Naive thymus-derived CD4-positive, alpha-beta T cell (primary cell): ENCODE measurements at regions of chr1 and their contacts with region 1.

Region 1: DNA sequence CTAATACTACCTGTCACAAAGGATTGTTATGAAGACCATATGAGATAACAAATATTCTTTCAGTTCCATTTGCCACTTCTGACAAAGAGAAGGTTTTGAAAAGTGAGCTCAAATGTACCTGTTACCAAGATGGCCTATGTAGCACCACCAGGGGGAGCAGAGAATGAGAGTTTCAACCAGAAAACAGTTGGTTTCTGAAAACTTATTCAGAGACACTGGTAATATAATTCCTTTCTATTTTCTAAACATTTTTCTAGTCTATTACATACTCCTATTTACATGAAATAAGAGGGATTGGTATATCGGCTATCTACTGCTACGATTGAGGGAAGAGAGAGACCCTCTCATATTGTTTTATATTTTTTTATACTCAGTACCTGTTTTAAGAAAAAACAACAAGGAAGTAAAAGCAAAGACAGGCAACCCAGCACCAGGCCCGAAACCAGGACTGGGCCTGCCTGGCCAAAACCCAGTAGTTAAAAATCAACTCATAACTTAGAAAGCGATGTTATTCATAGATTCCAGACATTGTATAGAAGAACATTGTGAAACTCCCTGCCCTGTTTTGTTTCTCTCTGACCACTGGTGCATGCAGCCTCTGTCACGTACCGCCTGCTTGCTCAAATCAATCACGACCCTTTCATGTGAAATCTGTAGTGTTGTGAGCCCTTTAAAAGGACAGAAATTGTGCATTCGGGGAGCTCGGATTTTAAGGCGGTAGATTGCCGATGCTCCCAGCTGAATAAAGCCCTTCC is 48.3 kb downstream of the IL23R start:
- DNase-seq: peak in 7 of 9 donors; percentile 18 to 58 (median 45)
- ATAC-seq: peak; percentile 57
- H3K4me3 ChIP-seq: no peak overlapping the region
- H3K4me3 Mint-ChIP-seq: no peak overlapping the region
- H3K27ac ChIP-seq: no peak overlapping the region
- H3K27ac Mint-ChIP-seq: peak overlapping the region in 3 of 9 donors; percentile 27 to 77 (median 70)
- H3K4me1 ChIP-seq: peaks cover 0 to 8% of the 10 kb centered on the region in 2 donors
- H3K4me1 Mint-ChIP-seq: peaks cover 14 to 43% (median 23%) of the 10 kb centered on the region in 7 donors
- H3K27me3 ChIP-seq: no peaks in the 10 kb centered on the region
- H3K27me3 Mint-ChIP-seq: no peaks in the 10 kb centered on the region

Region 2: GRCh38 chr1:66929999-66930822 is 284.4 kb before region 1 on chr1:
- CTCF ChIA-PET with region 1: interaction called, 3 read pairs
- POLR2A ChIA-PET with region 1: no interaction called
- intact Hi-C with region 1: loop called in 1 of 2 experiments (anchors 5 kb)
- DNase-seq: peak; percentile 88 to 97 (median 92)
- ATAC-seq: peak; percentile 88
- H3K4me3 ChIP-seq: peak overlapping the region; percentile 69
- H3K4me3 Mint-ChIP-seq: peak overlapping the region; percentile 85 to 98 (median 92)
- H3K27ac ChIP-seq: peak overlapping the region; percentile 91
- H3K27ac Mint-ChIP-seq: peak overlapping the region; percentile 79 to 95 (median 90)
- H3K4me1 ChIP-seq: peaks cover 45 to 48% of the 10 kb centered on the region in 2 donors
- H3K4me1 Mint-ChIP-seq: peaks cover 38 to 88% (median 70%) of the 10 kb centered on the region in 7 donors
- H3K27me3 ChIP-seq: no peaks in the 10 kb centered on the region
- H3K27me3 Mint-ChIP-seq: no peaks in the 10 kb centered on the region

Region 3: DNA sequence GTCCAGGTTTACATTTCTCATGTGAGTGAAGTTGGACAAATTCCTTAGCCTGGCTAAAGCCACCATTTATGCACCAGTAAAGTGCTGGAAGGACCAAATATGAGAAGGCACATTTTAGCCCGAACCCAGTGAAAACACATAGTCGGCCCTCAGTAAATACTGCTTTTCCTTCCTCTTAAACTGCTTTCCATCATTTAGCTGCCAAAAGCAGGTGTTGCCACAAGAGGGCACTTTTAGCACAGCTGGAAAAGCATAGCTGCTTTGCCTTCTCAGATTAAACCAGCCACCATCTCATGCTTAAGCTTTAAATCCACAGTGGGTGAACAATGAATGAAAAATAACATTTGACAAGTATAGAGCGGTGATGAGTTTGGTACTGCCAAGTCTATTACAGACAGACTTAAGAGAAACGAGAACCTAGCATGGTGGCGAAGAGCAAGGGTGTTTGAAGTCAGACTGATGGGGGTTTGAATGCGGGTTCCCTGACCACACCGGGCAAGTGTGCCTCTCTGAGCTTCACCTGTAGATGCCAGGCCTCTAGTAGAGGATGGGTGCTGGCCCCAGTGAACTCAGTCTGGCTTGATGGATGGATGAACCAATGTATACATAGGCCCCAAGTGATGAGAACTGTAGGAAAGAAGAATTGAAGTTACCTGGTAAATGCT is 218.4 kb before region 1 on chr1:
- CTCF ChIA-PET with region 1: interaction called, 36 read pairs
- POLR2A ChIA-PET with region 1: no interaction called
- intact Hi-C with region 1: loop called (anchors 1 kb)
- DNase-seq: peak; percentile 14 to 75 (median 63)
- ATAC-seq: peak; percentile 93
- H3K4me3 ChIP-seq: no peak overlapping the region
- H3K4me3 Mint-ChIP-seq: no peak overlapping the region
- H3K27ac ChIP-seq: no peak overlapping the region
- H3K27ac Mint-ChIP-seq: peak overlapping the region in 5 of 9 donors; percentile 7 to 78 (median 74)
- H3K4me1 ChIP-seq: peaks cover 0 to 5% of the 10 kb centered on the region in 2 donors
- H3K4me1 Mint-ChIP-seq: peaks cover 4 to 24% (median 23%) of the 10 kb centered on the region in 7 donors
- H3K27me3 ChIP-seq: no peaks in the 10 kb centered on the region
- H3K27me3 Mint-ChIP-seq: no peaks in the 10 kb centered on the region

Region 4: GRCh38 chr1:67174716-67175284 is 39.8 kb before region 1 on chr1:
- CTCF ChIA-PET with region 1: interaction called, 49 read pairs
- POLR2A ChIA-PET with region 1: interaction called, 8 read pairs
- intact Hi-C with region 1: loop called (anchors 1 kb)
- DNase-seq: no peak
- ATAC-seq: no peak
- H3K4me3 ChIP-seq: no peak overlapping the region
- H3K4me3 Mint-ChIP-seq: peak overlapping the region in 1 of 10 donors; percentile 15
- H3K27ac ChIP-seq: no peak overlapping the region
- H3K27ac Mint-ChIP-seq: peak overlapping the region in 1 of 9 donors; percentile 60
- H3K4me1 ChIP-seq: peaks cover 29 to 32% of the 10 kb centered on the region in 2 donors
- H3K4me1 Mint-ChIP-seq: peaks cover 43 to 66% (median 53%) of the 10 kb centered on the region in 7 donors
- H3K27me3 ChIP-seq: no peaks in the 10 kb centered on the region
- H3K27me3 Mint-ChIP-seq: peaks cover 0 to 4% (median 0%) of the 10 kb centered on the region in 5 donors

Region 5: DNA sequence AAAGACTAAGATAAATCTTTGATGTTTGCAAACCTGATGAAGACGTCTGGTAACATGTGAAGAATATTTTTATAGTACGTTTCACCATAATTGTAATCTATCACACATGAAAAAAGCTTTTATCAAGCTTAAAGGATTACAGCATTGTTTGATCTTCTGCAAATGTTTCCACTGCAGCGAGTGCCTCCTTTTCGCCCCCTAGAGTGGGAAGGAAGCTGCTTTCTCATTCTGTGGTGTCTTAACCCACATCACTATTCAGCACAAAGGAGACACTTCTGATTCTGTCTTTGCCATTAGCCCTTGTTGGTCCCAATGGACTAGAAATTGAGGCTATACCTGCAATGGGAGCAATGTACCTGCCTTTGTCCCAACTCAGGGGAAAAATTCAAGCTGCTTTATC is 47.1 kb after region 1 on chr1:
- CTCF ChIA-PET with region 1: interaction called, 10 read pairs
- POLR2A ChIA-PET with region 1: no interaction called
- intact Hi-C with region 1: loop called in 1 of 2 experiments (anchors 1 kb)
- DNase-seq: peak in 8 of 9 donors; percentile 24 to 67 (median 57)
- ATAC-seq: peak; percentile 52
- H3K4me3 ChIP-seq: no peak overlapping the region
- H3K4me3 Mint-ChIP-seq: peak overlapping the region in 7 of 10 donors; percentile 17 to 73 (median 34)
- H3K27ac ChIP-seq: no peak overlapping the region
- H3K27ac Mint-ChIP-seq: peak overlapping the region in 1 of 9 donors; percentile 8
- H3K4me1 ChIP-seq: peaks cover 17 to 22% of the 10 kb centered on the region in 2 donors
- H3K4me1 Mint-ChIP-seq: peaks cover 12 to 44% (median 31%) of the 10 kb centered on the region in 7 donors
- H3K27me3 ChIP-seq: no peaks in the 10 kb centered on the region
- H3K27me3 Mint-ChIP-seq: no peaks in the 10 kb centered on the region

Region 6: GRCh38 chr1:67500413-67500959 is 285.9 kb after region 1 on chr1:
- CTCF ChIA-PET with region 1: interaction called, 57 read pairs
- POLR2A ChIA-PET with region 1: interaction called, 10 read pairs
- intact Hi-C with region 1: loop called (anchors 1 kb)
- DNase-seq: peak; percentile 67 to 89 (median 81)
- ATAC-seq: peak; percentile 100
- H3K4me3 ChIP-seq: no peak overlapping the region
- H3K4me3 Mint-ChIP-seq: peak overlapping the region in 3 of 10 donors; percentile 26 to 56 (median 37)
- H3K27ac ChIP-seq: no peak overlapping the region
- H3K27ac Mint-ChIP-seq: peak overlapping the region in 1 of 9 donors; percentile 35
- H3K4me1 ChIP-seq: no peaks in the 10 kb centered on the region
- H3K4me1 Mint-ChIP-seq: peaks cover 0 to 5% (median 4%) of the 10 kb centered on the region in 7 donors
- H3K27me3 ChIP-seq: no peaks in the 10 kb centered on the region
- H3K27me3 Mint-ChIP-seq: peaks cover 0 to 11% (median 0%) of the 10 kb centered on the region in 5 donors